PC-3 (cell line): ENCODE measurements at regions of chr11 and their contacts with region 1.

Region 1: DNA sequence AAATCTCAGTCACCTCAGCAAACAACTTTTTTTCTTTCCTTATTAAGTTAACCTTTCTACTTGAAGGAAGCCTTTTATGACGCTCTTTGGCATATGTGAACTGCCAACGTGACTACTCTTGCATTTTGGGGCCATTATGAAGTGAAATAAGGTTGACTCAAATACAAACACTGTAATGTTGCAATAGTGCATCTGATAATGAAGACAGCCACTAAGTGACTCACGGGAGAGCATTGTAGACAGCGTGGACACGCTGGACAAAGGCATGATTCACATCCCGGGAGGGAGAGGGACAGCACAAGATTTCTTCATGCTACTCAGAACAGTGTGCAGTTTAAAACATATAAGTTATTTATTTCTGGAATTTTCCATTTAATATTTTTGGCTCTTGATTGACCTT is 560.8 kb downstream of the ETS1 start:
- DNase-seq: peak; percentile 98
- ATAC-seq: peak; percentile 85
- H3K4me3 ChIP-seq: no peak overlapping the region
- H3K27ac ChIP-seq: peak overlapping the region; percentile 59
- H3K4me1 ChIP-seq: peaks cover 30% of the 10 kb centered on the region
- H3K27me3 ChIP-seq: no peaks in the 10 kb centered on the region
- CTCF ChIP-seq: no peak

Region 2: GRCh38 chr11:128086794-128087193 is 60.2 kb after region 1 on chr11:
- CTCF ChIA-PET with region 1: no interaction called
- POLR2A ChIA-PET with region 1: no interaction called
- intact Hi-C with region 1: no loop called
- DNase-seq: no peak
- ATAC-seq: no peak
- H3K4me3 ChIP-seq: no peak overlapping the region
- H3K27ac ChIP-seq: no peak overlapping the region
- H3K4me1 ChIP-seq: no peaks in the 10 kb centered on the region
- H3K27me3 ChIP-seq: no peaks in the 10 kb centered on the region
- CTCF ChIP-seq: no peak

Region 3: DNA sequence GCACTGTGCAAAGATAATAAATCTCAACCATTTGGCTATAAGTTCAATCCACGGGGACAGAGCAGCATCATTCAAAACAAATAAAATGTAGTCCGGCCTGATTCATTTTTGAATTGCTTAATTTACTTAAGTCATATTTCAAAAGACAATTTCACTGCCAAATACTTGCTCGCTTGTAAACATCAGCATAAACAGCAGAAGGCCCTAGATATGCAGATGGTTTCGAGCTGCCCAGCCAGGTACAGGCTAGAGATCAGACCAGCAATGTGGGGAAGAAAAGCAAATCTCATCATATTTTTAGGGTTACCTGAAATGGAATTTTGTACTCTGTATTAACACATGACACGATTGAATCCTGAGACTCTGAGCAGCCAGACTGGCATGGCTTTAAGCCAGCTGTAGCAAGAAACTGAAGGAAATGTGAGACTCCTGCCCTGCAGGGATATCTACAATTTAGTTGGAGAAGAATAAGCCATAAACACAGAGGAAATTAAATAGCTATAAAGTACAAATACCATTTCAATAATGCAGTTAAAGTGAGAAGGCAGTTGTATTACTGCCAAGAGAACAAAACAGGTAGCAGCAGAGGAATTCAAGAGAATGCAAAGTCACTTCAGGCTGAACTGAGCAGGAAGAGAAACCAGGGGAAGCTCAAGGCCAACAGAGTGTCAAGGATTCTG is 120.5 kb after region 1 on chr11:
- CTCF ChIA-PET with region 1: no interaction called
- POLR2A ChIA-PET with region 1: no interaction called
- intact Hi-C with region 1: loop called (anchors 2 kb)
- DNase-seq: peak; percentile 86
- ATAC-seq: peak; percentile 81
- H3K4me3 ChIP-seq: peak overlapping the region; percentile 4; the same call in 1 of the 2 replicates
- H3K27ac ChIP-seq: peak overlapping the region; percentile 45
- H3K4me1 ChIP-seq: peaks cover 27% of the 10 kb centered on the region
- H3K27me3 ChIP-seq: no peaks in the 10 kb centered on the region
- CTCF ChIP-seq: no peak

Region 4: DNA sequence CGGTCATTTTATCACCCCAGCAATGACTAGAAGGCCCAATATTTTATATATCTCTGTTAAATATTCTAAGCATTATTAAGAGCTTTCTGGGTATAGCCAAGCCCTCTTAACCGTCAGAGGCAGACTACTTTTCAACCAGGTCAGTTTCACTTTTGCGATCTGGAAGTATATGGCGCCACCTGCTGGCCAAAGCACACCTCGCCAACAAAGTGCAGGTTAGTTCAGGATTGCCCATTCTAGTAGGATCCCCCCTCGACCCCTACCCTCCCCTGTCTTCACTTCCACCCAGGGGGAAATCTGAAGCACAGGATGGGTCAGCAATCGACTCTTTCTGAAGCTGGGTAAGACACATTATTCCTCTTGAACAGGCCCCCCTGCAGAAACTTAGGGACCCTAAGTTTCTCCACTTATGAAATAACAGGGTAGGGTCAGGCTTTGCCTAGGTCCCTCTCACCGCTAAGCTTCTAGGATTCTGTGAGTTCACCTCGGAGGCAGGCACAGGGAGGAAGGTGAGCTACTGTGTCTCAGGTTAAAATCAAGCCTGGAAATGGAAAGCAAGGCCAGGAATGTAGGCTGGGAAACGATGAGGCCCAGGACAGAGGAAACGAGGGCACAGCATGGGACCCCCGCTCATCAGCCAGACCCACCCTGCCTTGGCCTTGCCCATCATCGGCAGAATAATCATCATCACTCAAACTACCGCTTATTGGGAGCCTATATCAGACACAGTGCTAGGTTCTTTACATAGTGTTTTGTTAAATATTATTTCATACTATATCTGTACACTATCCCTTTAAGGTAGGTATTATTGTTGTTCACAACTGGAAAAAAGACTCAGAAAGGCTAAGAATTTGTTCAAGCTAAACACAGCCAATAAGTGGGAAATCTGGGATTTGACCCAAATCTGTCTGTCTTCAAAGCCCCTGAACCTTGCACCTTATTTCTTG is 804.9 kb after region 1 on chr11:
- CTCF ChIA-PET with region 1: no interaction called
- POLR2A ChIA-PET with region 1: no interaction called
- intact Hi-C with region 1: loop called (anchors 1 kb)
- DNase-seq: peak; percentile 91
- ATAC-seq: peak; percentile 94
- H3K4me3 ChIP-seq: peak overlapping the region; percentile 50; the same call in 1 of the 2 replicates
- H3K27ac ChIP-seq: no peak overlapping the region
- H3K4me1 ChIP-seq: peaks cover 18% of the 10 kb centered on the region; the same call in 1 of the 2 replicates
- H3K27me3 ChIP-seq: no peaks in the 10 kb centered on the region
- CTCF ChIP-seq: peak; percentile 97

Region 5: DNA sequence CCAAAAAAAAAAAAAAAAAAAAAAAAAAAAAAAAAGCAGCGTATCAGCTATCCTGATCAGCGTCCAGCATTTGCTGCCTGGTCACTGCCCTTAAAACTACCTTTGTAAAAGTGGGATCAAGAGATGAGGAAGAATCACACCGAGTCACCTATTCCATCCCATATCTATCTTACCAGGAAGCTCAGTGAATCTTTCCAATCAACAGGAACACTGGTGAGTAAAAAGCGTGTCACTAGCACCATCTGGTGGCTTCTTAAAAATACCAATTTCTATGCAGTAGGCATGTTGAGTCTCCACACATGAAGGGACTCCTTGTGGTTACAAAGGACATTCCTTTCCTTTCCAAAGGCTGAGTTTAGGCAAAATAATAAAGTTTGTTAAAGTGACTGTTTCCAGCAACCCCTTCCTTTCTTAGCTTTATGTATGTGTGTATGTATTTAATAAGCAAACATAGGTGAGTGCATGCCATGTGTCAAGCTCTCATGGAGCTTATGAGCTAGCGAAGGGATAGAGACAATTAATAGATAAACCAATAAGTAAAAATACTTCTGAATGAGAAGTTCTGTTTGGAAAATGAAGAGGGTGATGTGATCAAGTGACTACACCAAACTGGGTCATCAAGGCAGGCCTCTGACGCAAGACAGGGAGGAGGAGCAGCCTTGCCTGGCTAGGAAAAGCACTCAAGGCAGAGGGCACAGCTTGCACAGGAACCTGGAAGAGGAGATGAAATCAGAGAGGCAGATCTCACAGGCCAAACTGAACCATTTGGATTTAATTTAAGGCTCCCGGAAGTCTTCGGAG is 930.0 kb after region 1 on chr11:
- CTCF ChIA-PET with region 1: no interaction called
- POLR2A ChIA-PET with region 1: no interaction called
- intact Hi-C with region 1: loop called (anchors 1 kb)
- DNase-seq: peak; percentile 95
- ATAC-seq: peak; percentile 93
- H3K4me3 ChIP-seq: no peak overlapping the region
- H3K27ac ChIP-seq: no peak overlapping the region
- H3K4me1 ChIP-seq: no peaks in the 10 kb centered on the region
- H3K27me3 ChIP-seq: no peaks in the 10 kb centered on the region
- CTCF ChIP-seq: peak; percentile 94